ENCODE measurements at regions of chr9 and their contacts with region 1.

Region 1: GRCh38 chr9:128383007-128383753 is 12.0 kb downstream of the URM1 start:
- DNase-seq: peak; percentile 69
- ATAC-seq: peak; percentile 83
- H3K4me3 Mint-ChIP-seq: peak overlapping the region; percentile 28
- H3K27ac Mint-ChIP-seq: no peak overlapping the region
- H3K4me1 Mint-ChIP-seq: peaks cover 56% of the 10 kb centered on the region
- H3K27me3 Mint-ChIP-seq: peaks cover 84% of the 10 kb centered on the region
- CTCF ChIP-seq: no peak

Region 2: GRCh38 chr9:128275996-128276573 is 107.1 kb before region 1 on chr9 and contains the starts of genes GOLGA2 and SWI5:
- CTCF ChIA-PET with region 1: no interaction called
- POLR2A ChIA-PET with region 1: interaction called, 10 read pairs
- DNase-seq: peak; percentile 100
- ATAC-seq: peak; percentile 91
- H3K4me3 Mint-ChIP-seq: peak within 1 kb of the TSS; percentile 92
- H3K27ac Mint-ChIP-seq: peak within 1 kb of the TSS; percentile 97
- H3K4me1 Mint-ChIP-seq: peaks cover 14% of the 10 kb centered on the region
- H3K27me3 Mint-ChIP-seq: no peaks in the 10 kb centered on the region; the same call in 1 of the 2 replicates
- CTCF ChIP-seq: no peak
- total RNA-seq, gene GOLGA2: 54.7 to 66.3 TPM (median 58.8 TPM) in 3 replicates
- total RNA-seq, gene SWI5: 26.2 to 32.0 TPM (median 31.7 TPM) in 3 replicates

Region 3: GRCh38 chr9:128370826-128371621 is 12.2 kb before region 1 on chr9 and contains the start of gene URM1:
- CTCF ChIA-PET with region 1: interaction called, 74 read pairs
- POLR2A ChIA-PET with region 1: interaction called, 23 read pairs
- DNase-seq: peak; percentile 92
- ATAC-seq: peak; percentile 89
- H3K4me3 Mint-ChIP-seq: peak within 1 kb of the TSS; percentile 95
- H3K27ac Mint-ChIP-seq: peak within 1 kb of the TSS; percentile 80
- H3K4me1 Mint-ChIP-seq: peaks cover 26% of the 10 kb centered on the region
- H3K27me3 Mint-ChIP-seq: peaks cover 35% of the 10 kb centered on the region
- CTCF ChIP-seq: no peak
- total RNA-seq, gene URM1: 52.0 to 67.9 TPM (median 54.3 TPM) in 3 replicates

Measured in WTC11 (cell line).